ENCODE measurements at regions of chr16 and their contacts with region 1.

Region 1: DNA sequence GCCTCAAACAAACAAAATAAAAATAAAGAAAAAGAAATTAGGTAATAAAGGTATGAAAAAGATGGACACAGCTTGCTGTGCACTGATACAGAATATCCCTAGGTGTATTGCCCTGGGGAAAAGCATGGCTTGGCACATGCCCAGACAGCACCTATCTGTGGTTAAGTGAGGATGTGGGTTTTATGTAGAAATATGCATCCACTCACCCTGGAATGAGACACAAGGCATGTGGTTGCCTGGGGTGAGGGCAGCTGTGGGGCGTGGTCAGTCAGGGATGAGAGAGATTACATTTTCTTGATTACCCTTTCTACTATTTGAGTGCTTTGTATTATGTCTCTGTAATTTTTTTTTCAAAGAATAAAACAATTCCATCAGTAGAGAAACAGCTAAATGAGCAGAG is 6.9 kb downstream of the PLLP start:
- DNase-seq: peak; percentile 96
- H3K4me3 ChIP-seq: no peak overlapping the region
- H3K27ac ChIP-seq: peak overlapping the region; percentile 80
- H3K4me1 ChIP-seq: peaks cover 36% of the 10 kb centered on the region
- H3K27me3 ChIP-seq: no peaks in the 10 kb centered on the region
- CTCF ChIP-seq: no peak

Region 2: GRCh38 chr16:57260294-57260929 is 17.2 kb before region 1 on chr16:
- CTCF ChIA-PET with region 1: no interaction called
- dilution Hi-C with region 1: no loop called
- in situ Hi-C with region 1: no loop called
- intact Hi-C with region 1: loop called (anchors 2 kb)
- DNase-seq: peak; percentile 84
- H3K4me3 ChIP-seq: no peak overlapping the region
- H3K27ac ChIP-seq: peak overlapping the region; percentile 54
- H3K4me1 ChIP-seq: peaks cover 47% of the 10 kb centered on the region
- H3K27me3 ChIP-seq: no peaks in the 10 kb centered on the region
- CTCF ChIP-seq: no peak

Region 3: GRCh38 chr16:57422026-57422944 is 144.7 kb after region 1 on chr16:
- CTCF ChIA-PET with region 1: no interaction called
- dilution Hi-C with region 1: no loop called
- in situ Hi-C with region 1: no loop called
- intact Hi-C with region 1: loop called (anchors 1 kb)
- DNase-seq: peak; percentile 33
- H3K4me3 ChIP-seq: no peak overlapping the region
- H3K27ac ChIP-seq: no peak overlapping the region
- H3K4me1 ChIP-seq: peaks cover 12% of the 10 kb centered on the region
- H3K27me3 ChIP-seq: no peaks in the 10 kb centered on the region
- CTCF ChIP-seq: peak; percentile 69

Measured in mammary epithelial cell (primary cell).